Activated naive CD4-positive, alpha-beta T cell treated with anti-CD3 and anti-CD28 coated beads for 36 hours (primary cell): ENCODE measurements at regions of chr4 and their contacts with region 1.

Region 1: GRCh38 chr4:16196478-16197393 is 29.5 kb downstream of the TAPT1 start:
- DNase-seq: no peak
- H3K4me3 Mint-ChIP-seq: no peak overlapping the region
- H3K27ac Mint-ChIP-seq: no peak overlapping the region
- H3K4me1 Mint-ChIP-seq: peaks cover 29% of the 10 kb centered on the region
- H3K27me3 Mint-ChIP-seq: no peaks in the 10 kb centered on the region

Region 2: GRCh38 chr4:15963001-15963451 is 233.7 kb before region 1 on chr4 and contains the start of gene FGFBP2:
- CTCF ChIA-PET with region 1: no interaction called
- intact Hi-C with region 1: loop called (anchors 1 kb)
- DNase-seq: peak; percentile 76
- H3K4me3 Mint-ChIP-seq: no peak within 1 kb of the TSS
- H3K27ac Mint-ChIP-seq: no peak within 1 kb of the TSS
- H3K4me1 Mint-ChIP-seq: peaks cover 11% of the 10 kb centered on the region
- H3K27me3 Mint-ChIP-seq: peaks cover 2% of the 10 kb centered on the region
- total RNA-seq, gene FGFBP2: not detected

Region 3: GRCh38 chr4:16183604-16184003 is 13.1 kb before region 1 on chr4:
- CTCF ChIA-PET with region 1: interaction called, 14 read pairs
- intact Hi-C with region 1: no loop called
- DNase-seq: no peak
- H3K4me3 Mint-ChIP-seq: no peak overlapping the region
- H3K27ac Mint-ChIP-seq: no peak overlapping the region
- H3K4me1 Mint-ChIP-seq: no peaks in the 10 kb centered on the region
- H3K27me3 Mint-ChIP-seq: no peaks in the 10 kb centered on the region